ENCODE measurements at regions of chr4 and their contacts with region 1.

Region 1: DNA sequence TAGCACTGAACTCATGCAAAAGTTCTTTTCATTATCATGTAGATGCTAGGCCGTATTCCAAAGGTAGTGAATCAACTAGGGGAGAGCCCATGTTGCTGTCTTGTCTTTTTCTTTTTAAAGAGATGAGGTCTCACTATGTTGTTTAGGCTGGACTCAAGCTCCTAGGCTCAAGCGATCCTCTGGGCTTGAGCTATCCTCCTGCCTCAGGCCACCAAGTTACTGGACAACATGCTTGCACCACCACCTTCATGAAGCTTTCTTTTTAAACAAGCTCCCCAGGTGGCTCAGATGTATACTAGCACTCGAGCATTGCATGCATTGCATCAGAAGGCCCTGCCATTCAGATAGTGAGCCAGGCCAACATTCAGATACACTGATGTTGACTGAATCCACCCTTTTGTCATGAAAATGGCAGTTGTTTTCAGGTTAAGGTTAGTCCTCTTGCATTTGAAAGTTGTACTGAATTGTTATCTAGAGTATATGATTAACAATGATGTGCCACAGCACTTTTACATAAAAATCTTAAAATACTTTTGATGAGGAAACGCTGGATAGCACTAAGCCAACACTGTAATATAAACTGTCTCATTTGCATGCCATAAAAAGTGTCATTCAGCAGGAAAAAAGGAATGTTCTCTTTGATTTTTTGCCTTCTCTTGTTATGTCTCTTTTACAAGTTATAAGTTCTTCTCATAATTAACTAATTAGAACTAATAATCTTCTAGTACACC is 76.7 kb downstream of the FNIP2 start:
- DNase-seq: no peak
- ATAC-seq: no peak
- H3K4me3 ChIP-seq: no peak overlapping the region
- H3K27ac ChIP-seq: peak overlapping the region in 2 of 4 donors; percentile 9 to 43
- H3K4me1 ChIP-seq: peaks cover 16% of the 10 kb centered on the region
- H3K27me3 ChIP-seq: no peaks in the 10 kb centered on the region
- CTCF ChIP-seq: no peak
- POLR2A ChIP-seq: no peak

Region 2: DNA sequence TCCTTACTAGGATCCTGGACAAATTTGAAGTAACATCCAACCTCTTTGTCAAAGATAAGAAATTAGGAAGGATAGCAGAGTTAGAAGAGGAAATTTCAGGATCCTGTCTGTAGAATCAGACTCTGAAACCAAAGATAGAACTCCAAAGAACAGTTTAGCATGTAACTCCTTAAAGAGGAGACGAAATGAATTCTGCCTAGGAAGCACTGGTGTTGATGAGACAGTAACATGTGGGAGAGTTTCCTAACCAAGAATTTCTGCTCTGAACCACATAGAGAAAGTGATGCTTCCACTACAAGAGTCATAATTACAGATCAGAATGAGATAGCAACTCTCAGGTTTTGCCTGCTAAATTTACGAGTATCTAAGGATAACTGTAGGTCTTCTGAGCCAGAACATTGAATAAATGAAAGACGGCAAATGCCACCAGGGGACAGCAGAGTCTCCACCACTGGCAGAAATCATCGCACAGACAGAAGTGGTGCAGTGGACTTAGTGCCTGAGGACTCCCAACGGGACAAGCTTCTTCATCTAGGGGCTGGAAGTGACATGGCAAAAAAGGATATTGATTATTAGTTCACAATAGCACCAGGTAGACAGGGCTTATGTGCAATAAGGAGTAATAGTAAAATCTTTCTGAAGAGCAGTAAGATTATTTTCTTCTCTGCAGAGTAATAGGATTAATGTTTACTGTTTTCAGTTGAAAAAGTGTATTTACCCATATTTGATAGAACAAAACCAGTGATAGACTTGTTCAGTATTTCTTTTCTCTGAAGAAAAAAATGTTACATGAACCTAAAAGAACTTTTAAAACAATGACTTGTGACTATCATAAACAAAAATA is 115.5 kb before region 1 on chr4:
- intact Hi-C with region 1: loop called (anchors 5 kb)
- DNase-seq: peak; percentile 67 to 79 (median 74)
- ATAC-seq: peak; percentile 86
- H3K4me3 ChIP-seq: no peak overlapping the region
- H3K27ac ChIP-seq: no peak overlapping the region
- H3K4me1 ChIP-seq: no peaks in the 10 kb centered on the region
- H3K27me3 ChIP-seq: no peaks in the 10 kb centered on the region
- CTCF ChIP-seq: peak; percentile 75 to 97 (median 93)
- POLR2A ChIP-seq: no peak

Region 3: DNA sequence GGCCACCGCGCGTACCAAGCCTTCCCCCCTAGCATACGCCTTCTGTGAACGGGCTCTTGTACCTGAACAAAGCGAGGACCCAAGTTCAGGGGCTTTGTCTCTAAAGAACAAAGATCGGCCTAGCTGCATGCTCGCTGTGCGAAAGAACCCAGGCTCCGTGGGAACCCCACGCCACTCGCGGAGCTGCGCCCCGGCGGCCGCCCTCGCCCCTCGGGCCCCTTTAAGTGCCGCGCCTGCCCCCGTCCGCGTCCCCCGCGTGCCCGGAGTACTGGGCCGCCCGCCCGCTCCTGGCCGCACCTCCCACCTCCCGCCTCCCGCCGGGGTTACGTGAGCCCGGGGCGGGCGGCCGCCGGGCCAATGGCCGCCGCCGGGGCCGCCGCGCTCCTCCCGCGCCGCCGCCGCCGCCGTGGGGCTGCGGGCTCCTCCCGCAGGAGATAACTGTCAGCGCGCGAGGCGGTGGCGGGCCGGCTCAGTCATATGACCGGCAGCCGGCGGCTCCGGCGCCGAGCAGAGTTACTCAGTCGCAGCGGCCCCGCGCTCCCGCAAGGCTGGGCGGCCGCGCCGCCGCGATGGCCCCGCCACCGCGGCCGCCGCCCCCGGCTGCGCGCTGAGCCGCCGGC is 76.8 kb before region 1 on chr4 and contains the start of gene FNIP2:
- intact Hi-C with region 1: loop called (anchors 10 kb)
- DNase-seq: peak; percentile 84 to 90 (median 84)
- ATAC-seq: peak; percentile 95
- H3K4me3 ChIP-seq: peak within 1 kb of the TSS; percentile 62 to 78
- H3K27ac ChIP-seq: peak within 1 kb of the TSS; percentile 82 to 97 (median 89)
- H3K4me1 ChIP-seq: peaks cover 31% of the 10 kb centered on the region
- H3K27me3 ChIP-seq: no peaks in the 10 kb centered on the region
- CTCF ChIP-seq: no peak
- POLR2A ChIP-seq: peak; percentile 72 to 77 (median 74)
- total RNA-seq, gene FNIP2: 26.7 to 38.2 TPM